ENCODE measurements at regions of chr3 and their contacts with region 1.

Region 1: DNA sequence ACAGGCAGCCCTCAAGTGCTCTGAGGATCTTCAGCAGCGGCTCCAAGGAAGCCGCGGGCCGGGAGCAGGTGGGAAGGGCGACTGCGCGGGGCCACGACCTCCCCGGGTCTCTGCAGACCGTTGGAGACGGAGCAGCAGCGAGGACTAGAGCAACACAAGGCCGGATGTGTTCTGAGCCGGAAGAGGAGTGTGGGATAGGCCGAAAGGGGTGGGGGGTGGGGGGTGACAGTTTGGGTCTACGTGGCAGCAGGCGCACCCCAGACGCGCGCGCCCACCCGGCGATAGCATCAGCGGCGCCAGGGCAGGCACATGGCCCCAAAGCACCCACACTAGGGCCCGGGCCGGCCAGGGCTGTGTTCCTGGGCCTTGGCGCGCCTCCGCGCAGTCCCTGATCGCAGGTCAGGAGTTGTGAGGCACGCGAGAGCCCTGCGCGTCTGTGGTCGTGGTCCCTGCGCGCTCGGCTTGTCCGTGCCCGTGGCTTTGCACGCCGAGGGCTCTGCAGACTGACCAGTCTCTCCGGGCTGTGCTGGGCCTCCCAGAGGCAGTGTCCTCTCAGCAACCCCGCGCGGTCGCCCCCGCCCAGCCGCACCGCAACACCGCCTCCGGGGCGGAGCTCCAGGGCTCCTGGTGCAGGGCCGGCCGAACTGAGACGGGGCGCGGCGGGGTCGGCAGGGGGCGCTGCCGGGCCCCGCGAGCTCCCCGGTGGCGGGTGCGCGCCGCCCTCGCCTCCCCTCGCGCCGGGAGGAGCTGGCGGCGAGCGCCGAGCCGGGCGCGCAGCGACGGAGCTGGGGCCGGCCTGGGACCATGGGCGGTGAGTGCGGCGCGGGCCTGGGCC is at the start of gene PXYLP1:
- DNase-seq: peak; percentile 96
- CTCF ChIP-seq: peak; percentile 84

Region 2: GRCh38 chr3:141243271-141243707 is 12.0 kb after region 1 on chr3:
- CTCF ChIA-PET with region 1: interaction called, 57 read pairs
- POLR2A ChIA-PET with region 1: no interaction called
- DNase-seq: no peak
- CTCF ChIP-seq: no peak

Region 3: GRCh38 chr3:141266797-141267555 is 35.7 kb after region 1 on chr3:
- CTCF ChIA-PET with region 1: interaction called, 19 read pairs
- POLR2A ChIA-PET with region 1: interaction called, 3 read pairs
- DNase-seq: peak; percentile 47
- CTCF ChIP-seq: no peak

Region 4: DNA sequence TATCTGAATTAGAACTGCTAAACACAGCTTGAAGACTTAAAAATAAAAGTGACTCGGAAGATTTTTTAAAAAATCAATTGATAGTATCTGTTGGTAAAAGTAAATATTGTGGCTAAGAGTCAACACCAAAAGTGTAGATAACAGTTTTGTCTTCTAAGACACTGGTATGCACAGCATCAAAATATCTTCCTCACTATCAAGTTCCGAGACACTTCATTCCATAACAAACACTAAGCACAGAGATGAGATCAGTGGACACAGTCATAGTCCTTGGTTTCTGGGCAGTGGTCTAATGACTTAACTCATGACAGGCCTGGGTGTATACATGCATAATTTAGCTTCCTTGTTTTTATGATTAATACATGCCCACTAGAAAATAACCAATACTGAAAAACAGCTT is 63.5 kb after region 1 on chr3:
- CTCF ChIA-PET with region 1: interaction called, 10 read pairs
- POLR2A ChIA-PET with region 1: no interaction called
- DNase-seq: no peak
- CTCF ChIP-seq: no peak

Region 5: DNA sequence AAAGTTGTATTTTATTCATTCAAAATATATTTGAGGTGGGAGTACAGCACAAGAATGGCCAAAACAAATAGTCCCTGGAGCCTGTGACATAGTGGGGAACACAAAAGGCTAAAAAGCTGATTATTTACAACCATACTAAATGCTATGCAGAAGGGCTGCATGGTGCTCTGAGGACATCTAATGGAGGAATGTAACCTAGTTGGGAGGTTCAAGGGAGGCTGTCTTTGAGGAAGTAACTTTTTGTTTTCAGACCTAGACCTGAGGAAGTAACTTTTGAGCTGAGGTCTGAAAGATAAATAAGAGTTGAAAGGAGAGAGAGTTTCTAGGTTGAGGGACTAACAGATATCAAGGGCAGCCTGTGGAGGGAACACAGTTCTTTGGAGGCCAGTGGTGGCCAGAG is 220.7 kb after region 1 on chr3:
- CTCF ChIA-PET with region 1: interaction called, 17 read pairs
- POLR2A ChIA-PET with region 1: no interaction called
- DNase-seq: peak; percentile 67
- CTCF ChIP-seq: peak; percentile 80